Natural killer cell (primary cell): ENCODE measurements at regions of chr5 and their contacts with region 1.

Region 1: GRCh38 chr5:41856644-41857491 is 13.4 kb downstream of the OXCT1 start:
- DNase-seq: peak; percentile 20 to 89
- ATAC-seq: peak; percentile 86 to 95 (median 91)
- H3K4me3 ChIP-seq: no peak overlapping the region
- H3K4me3 Mint-ChIP-seq: no peak overlapping the region
- H3K27ac ChIP-seq: no peak overlapping the region
- H3K27ac Mint-ChIP-seq: peak overlapping the region in 1 of 2 donors; percentile 31
- H3K4me1 ChIP-seq: no peaks in the 10 kb centered on the region
- H3K4me1 Mint-ChIP-seq: peaks cover 0 to 5% of the 10 kb centered on the region in 2 donors
- H3K27me3 ChIP-seq: no peaks in the 10 kb centered on the region
- H3K27me3 Mint-ChIP-seq: no peaks in the 10 kb centered on the region
- CTCF ChIP-seq: peak; percentile 85

Region 2: DNA sequence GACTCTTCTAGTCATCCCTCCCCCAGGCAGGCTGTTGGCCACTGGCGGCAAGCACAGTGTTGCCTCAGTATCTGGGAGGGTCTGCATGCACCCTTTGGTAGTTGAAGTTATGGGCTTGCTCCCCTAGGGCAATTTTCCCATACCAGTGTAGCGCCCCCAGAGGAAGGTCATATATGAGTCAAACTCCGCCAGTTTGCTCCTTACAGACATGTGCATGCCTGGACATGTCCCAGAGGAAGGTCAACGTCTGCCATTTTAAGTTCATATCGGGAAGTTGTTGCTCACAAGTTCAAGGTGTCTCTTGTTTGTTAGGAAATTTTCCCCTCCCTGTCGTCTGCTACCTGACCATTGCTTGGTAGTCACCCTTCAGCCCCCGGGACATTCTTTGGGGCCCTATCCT is 734.4 kb before region 1 on chr5:
- intact Hi-C with region 1: no loop called
- DNase-seq: no peak
- ATAC-seq: no peak
- H3K4me3 ChIP-seq: no peak overlapping the region
- H3K4me3 Mint-ChIP-seq: no peak overlapping the region
- H3K27ac ChIP-seq: no peak overlapping the region
- H3K27ac Mint-ChIP-seq: no peak overlapping the region
- H3K4me1 ChIP-seq: no peaks in the 10 kb centered on the region
- H3K4me1 Mint-ChIP-seq: no peaks in the 10 kb centered on the region
- H3K27me3 ChIP-seq: no peaks in the 10 kb centered on the region
- H3K27me3 Mint-ChIP-seq: no peaks in the 10 kb centered on the region
- CTCF ChIP-seq: no peak

Region 3: DNA sequence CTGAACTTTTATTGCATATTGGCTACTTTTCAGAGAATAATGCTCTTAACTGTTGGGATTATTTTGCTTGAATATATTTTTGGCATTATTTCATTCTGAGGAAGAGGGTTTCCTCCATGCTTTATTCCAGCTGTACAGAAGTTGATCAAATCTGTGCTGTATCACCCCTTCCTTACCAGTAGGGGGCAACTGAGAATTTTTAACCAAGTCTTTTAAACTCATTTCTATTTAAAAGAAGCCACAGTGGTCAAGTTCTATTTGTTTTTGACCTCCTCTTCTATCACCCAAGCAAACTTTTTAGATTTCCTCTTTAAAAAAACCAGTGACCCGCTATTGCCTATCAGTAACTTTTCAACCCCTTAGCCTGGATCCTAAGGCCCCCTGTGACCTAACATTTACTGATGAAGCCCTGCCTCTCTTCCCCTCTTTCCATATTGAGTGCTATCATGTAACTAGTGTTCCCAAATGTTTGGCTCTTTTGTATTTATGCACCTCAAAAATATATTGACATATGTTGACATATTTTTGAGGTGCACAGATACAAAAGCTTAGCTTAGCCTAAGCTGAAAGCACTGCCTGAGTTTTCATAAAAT is 148.8 kb after region 1 on chr5:
- intact Hi-C with region 1: loop called (anchors 5 kb)
- DNase-seq: peak in 1 of 2 donors; percentile 22
- ATAC-seq: peak in 1 of 3 donors; percentile 38
- H3K4me3 ChIP-seq: no peak overlapping the region
- H3K4me3 Mint-ChIP-seq: no peak overlapping the region
- H3K27ac ChIP-seq: no peak overlapping the region
- H3K27ac Mint-ChIP-seq: no peak overlapping the region
- H3K4me1 ChIP-seq: no peaks in the 10 kb centered on the region
- H3K4me1 Mint-ChIP-seq: no peaks in the 10 kb centered on the region
- H3K27me3 ChIP-seq: no peaks in the 10 kb centered on the region
- H3K27me3 Mint-ChIP-seq: peaks cover 2 to 23% of the 10 kb centered on the region in 2 donors
- CTCF ChIP-seq: peak; percentile 80

Region 4: DNA sequence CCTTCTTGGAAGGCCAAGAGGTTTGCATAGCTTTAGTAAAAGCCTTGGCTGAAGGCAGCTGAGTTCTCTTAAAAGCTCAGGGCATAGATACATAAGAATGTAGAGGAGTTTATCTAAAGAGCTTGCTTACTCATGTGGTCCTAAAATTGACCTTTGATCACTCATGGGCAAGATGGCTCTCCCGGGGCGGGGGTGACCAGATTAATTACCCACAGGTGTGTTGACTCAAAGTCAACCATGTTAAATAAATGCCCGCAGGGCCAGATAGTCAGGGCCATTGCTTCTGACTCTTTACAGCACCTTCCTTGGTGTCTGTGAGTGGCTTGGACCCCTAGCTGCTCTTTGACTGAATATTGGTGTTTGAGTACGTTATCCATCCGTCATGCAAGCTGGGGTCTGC is 533.2 kb after region 1 on chr5:
- intact Hi-C with region 1: no loop called
- DNase-seq: no peak
- ATAC-seq: no peak
- H3K4me3 ChIP-seq: no peak overlapping the region
- H3K4me3 Mint-ChIP-seq: no peak overlapping the region
- H3K27ac ChIP-seq: no peak overlapping the region
- H3K27ac Mint-ChIP-seq: no peak overlapping the region
- H3K4me1 ChIP-seq: no peaks in the 10 kb centered on the region
- H3K4me1 Mint-ChIP-seq: no peaks in the 10 kb centered on the region
- H3K27me3 ChIP-seq: no peaks in the 10 kb centered on the region
- H3K27me3 Mint-ChIP-seq: no peaks in the 10 kb centered on the region
- CTCF ChIP-seq: no peak

Region 5: DNA sequence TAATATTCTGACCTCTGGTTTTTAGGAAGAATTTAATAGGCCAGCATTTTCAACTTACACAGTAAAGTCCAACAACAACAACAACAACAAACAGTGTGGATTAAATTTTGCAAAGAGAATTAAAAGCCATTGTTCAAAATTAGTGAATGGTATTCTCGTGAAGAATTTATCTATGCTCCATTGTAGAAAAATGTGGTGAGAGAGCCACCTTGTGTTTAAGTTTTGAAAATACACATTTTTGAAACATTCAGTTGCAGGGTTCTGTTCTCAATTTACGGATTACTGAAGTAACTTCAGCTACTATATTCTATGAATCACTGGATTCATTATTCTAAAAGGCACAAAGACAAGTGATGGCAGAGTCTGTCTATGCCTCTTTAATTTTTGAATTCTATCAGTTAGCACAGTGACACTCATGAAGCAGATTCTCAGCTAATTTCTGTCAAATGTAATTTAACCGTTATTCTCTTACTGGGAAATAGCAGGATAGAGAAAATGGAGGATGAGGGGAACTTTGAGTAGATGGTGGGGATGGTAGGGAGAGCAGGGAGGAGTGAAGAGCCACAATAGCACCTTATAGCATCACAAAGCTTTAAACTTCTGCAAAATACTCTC is 910.7 kb after region 1 on chr5:
- intact Hi-C with region 1: loop called (anchors 1 kb)
- DNase-seq: peak in 1 of 2 donors; percentile 46
- ATAC-seq: peak in 2 of 3 donors; percentile 44 to 53
- H3K4me3 ChIP-seq: no peak overlapping the region
- H3K4me3 Mint-ChIP-seq: no peak overlapping the region
- H3K27ac ChIP-seq: no peak overlapping the region
- H3K27ac Mint-ChIP-seq: no peak overlapping the region
- H3K4me1 ChIP-seq: no peaks in the 10 kb centered on the region
- H3K4me1 Mint-ChIP-seq: no peaks in the 10 kb centered on the region
- H3K27me3 ChIP-seq: no peaks in the 10 kb centered on the region
- H3K27me3 Mint-ChIP-seq: peaks cover 4 to 5% of the 10 kb centered on the region in 2 donors
- CTCF ChIP-seq: peak; percentile 71

Region 6: DNA sequence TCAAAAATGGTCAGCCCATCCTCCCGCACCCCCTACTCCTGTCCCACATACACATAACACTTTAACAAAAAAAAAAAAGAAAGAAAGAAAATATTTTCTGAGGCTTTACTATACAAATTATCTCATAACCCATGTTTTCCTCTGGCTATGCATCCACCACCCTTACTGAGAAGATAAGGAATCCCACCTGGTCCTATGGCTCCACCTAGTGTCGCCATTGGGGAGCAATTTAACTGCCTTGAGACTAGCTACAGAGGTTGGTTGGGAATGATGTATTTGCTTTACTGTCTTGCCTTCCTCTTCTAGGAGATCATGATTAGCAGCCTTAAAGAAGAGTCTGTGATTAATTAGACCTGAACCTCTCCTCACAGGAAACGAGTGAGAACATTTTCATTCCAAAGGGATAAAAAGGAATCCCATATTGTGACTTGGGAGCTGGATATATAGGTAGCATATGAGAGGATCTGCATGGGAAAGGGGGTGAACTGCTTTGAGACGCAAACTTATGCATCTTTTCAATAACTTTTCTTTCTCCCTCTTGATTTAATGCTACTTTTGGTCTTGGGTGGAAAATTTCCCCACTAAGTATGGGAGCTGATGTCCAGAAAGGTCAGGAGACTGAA is 1032.6 kb after region 1 on chr5:
- intact Hi-C with region 1: loop called (anchors 2 kb)
- DNase-seq: peak; percentile 39 to 80
- ATAC-seq: peak; percentile 75 to 92 (median 82)
- H3K4me3 ChIP-seq: no peak overlapping the region
- H3K4me3 Mint-ChIP-seq: no peak overlapping the region
- H3K27ac ChIP-seq: no peak overlapping the region
- H3K27ac Mint-ChIP-seq: no peak overlapping the region
- H3K4me1 ChIP-seq: no peaks in the 10 kb centered on the region
- H3K4me1 Mint-ChIP-seq: no peaks in the 10 kb centered on the region
- H3K27me3 ChIP-seq: no peaks in the 10 kb centered on the region
- H3K27me3 Mint-ChIP-seq: peaks cover 0 to 6% of the 10 kb centered on the region in 2 donors
- CTCF ChIP-seq: peak; percentile 83